ENCODE measurements at regions of chr3 and their contacts with region 1.

Region 1: DNA sequence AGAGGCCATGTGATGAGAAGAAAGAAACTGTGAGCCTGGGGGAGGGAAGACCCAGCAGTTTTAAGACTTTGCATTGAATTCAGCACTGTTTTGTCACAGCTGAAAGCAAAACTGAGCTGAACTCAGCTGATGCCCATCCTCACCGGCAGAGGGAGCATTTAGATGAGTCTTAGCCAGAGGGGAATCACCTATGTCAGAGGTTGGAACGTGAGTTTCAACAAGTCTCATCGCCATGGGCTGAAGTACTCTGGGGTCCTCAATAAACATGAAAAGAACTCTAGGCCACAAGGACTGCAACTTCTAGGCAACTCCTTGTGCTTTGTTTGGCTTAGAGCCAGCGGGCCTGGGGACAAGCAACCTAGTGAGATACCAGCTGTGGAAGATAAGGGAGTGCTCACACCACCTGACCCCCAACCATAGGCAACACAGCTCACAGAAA is 324.5 kb downstream of the TBL1XR1 start:
- DNase-seq: peak; percentile 34 to 58
- H3K4me3 ChIP-seq: no peak overlapping the region
- H3K27ac ChIP-seq: no peak overlapping the region
- H3K4me1 ChIP-seq: no peaks in the 10 kb centered on the region
- H3K27me3 ChIP-seq: no peaks in the 10 kb centered on the region
- CTCF ChIP-seq: peak; percentile 89

Region 2: GRCh38 chr3:176415701-176416191 is 457.0 kb before region 1 on chr3:
- CTCF ChIA-PET with region 1: no interaction called
- POLR2A ChIA-PET with region 1: no interaction called
- intact Hi-C with region 1: no loop called
- DNase-seq: no peak
- H3K4me3 ChIP-seq: no peak overlapping the region
- H3K27ac ChIP-seq: no peak overlapping the region
- H3K4me1 ChIP-seq: no peaks in the 10 kb centered on the region
- H3K27me3 ChIP-seq: no peaks in the 10 kb centered on the region
- CTCF ChIP-seq: no peak

Region 3: GRCh38 chr3:176723758-176724393 is 148.9 kb before region 1 on chr3:
- CTCF ChIA-PET with region 1: no interaction called
- POLR2A ChIA-PET with region 1: no interaction called
- intact Hi-C with region 1: no loop called
- DNase-seq: no peak
- H3K4me3 ChIP-seq: no peak overlapping the region
- H3K27ac ChIP-seq: no peak overlapping the region
- H3K4me1 ChIP-seq: no peaks in the 10 kb centered on the region
- H3K27me3 ChIP-seq: no peaks in the 10 kb centered on the region
- CTCF ChIP-seq: no peak

Region 4: DNA sequence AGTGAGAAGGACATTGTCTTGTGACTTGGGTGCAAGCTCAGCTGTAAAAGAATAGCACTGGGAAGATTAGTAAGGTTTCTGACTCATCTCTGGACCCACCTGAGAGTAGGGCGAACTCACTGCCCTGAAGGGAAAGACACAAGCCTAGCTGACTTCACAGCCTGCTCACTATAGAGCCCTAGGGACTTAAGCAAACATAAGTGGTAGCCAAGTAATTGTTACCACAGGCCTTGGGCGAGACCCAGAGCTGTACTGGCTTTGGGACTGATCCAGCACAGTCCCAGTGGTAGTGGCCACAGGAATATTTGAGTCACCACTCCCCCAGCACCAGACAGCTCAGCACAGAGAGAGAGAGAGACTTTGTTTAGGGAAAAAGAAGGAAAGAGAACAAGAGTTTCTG is 105.4 kb before region 1 on chr3:
- CTCF ChIA-PET with region 1: interaction called, 3 read pairs
- POLR2A ChIA-PET with region 1: no interaction called
- intact Hi-C with region 1: loop called (anchors 5 kb)
- DNase-seq: peak; percentile 87
- H3K4me3 ChIP-seq: no peak overlapping the region
- H3K27ac ChIP-seq: peak overlapping the region; percentile 58
- H3K4me1 ChIP-seq: peaks cover 21% of the 10 kb centered on the region
- H3K27me3 ChIP-seq: no peaks in the 10 kb centered on the region
- CTCF ChIP-seq: no peak

Measured in PC-9 (cell line).